ENCODE measurements at regions of chr2 and their contacts with region 1.

Region 1: GRCh38 chr2:40357667-40358066 is 94.2 kb downstream of the SLC8A1 start:
- DNase-seq: peak; percentile 70
- ATAC-seq: peak; percentile 78
- H3K4me3 ChIP-seq: no peak overlapping the region
- H3K27ac ChIP-seq: no peak overlapping the region
- H3K4me1 ChIP-seq: peaks cover 14% of the 10 kb centered on the region
- H3K27me3 ChIP-seq: no peaks in the 10 kb centered on the region
- CTCF ChIP-seq: no peak
- POLR2A ChIP-seq: no peak
- RAD21 ChIP-seq: no peak

Region 2: GRCh38 chr2:40230707-40231432 is 126.8 kb before region 1 on chr2:
- CTCF ChIA-PET with region 1: no interaction called
- POLR2A ChIA-PET with region 1: no interaction called
- dilution Hi-C with region 1: no loop called
- in situ Hi-C with region 1: no loop called
- intact Hi-C with region 1: no loop called
- DNase-seq: no peak
- ATAC-seq: peak; percentile 61
- H3K4me3 ChIP-seq: no peak overlapping the region
- H3K27ac ChIP-seq: no peak overlapping the region
- H3K4me1 ChIP-seq: peaks cover 3% of the 10 kb centered on the region; the same call in 1 of the 2 replicates
- H3K27me3 ChIP-seq: no peaks in the 10 kb centered on the region
- CTCF ChIP-seq: no peak
- POLR2A ChIP-seq: no peak
- RAD21 ChIP-seq: no peak

Region 3: GRCh38 chr2:40298026-40298425 is 59.6 kb before region 1 on chr2:
- CTCF ChIA-PET with region 1: no interaction called
- POLR2A ChIA-PET with region 1: interaction called, 10 read pairs
- dilution Hi-C with region 1: no loop called
- in situ Hi-C with region 1: no loop called
- intact Hi-C with region 1: no loop called
- DNase-seq: no peak
- ATAC-seq: no peak
- H3K4me3 ChIP-seq: no peak overlapping the region
- H3K27ac ChIP-seq: no peak overlapping the region
- H3K4me1 ChIP-seq: no peaks in the 10 kb centered on the region; the same call in 1 of the 2 replicates
- H3K27me3 ChIP-seq: no peaks in the 10 kb centered on the region
- CTCF ChIP-seq: no peak
- POLR2A ChIP-seq: no peak
- RAD21 ChIP-seq: no peak